T-cell (primary cell): ENCODE measurements at regions of chr3 and their contacts with region 1.

Region 1: DNA sequence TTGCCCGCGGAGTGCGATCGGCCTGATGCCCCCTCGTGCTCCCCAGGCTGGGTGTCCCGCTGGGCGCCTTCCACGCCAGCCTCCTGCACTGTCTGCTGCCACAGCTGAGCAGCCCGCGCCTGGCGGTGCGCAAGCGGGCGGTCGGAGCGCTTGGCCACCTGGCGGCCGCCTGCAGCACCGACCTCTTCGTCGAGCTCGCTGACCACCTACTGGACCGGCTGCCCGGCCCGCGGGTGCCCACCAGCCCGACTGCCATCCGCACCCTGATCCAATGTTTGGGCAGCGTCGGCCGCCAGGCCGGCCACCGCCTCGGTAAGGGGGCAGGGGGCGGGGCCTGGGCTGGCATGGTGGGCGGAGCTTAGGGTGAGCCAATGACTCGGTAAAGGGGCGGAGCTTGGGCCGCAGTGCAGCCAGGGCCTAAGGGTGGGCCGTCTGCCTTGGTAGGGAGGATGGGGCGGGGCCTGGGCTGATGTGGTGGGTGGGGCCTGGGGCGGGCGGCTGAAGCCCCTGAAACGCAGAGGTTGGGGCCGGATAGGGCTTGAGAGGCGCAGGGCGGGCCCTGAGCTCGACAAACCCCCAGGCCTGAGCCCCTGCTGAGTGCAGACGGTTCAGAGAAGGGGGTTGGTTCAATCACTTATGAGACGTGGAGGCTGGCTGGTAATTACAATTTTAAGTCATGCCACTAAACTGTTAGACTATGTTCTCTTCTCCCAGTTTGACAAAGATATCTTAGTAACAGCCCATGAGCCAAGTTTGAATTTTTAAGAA is 13.7 kb downstream of the CAND2 start:
- DNase-seq: peak; percentile 78 to 95 (median 92)
- ATAC-seq: peak; percentile 98 to 100 (median 99)
- H3K4me3 ChIP-seq: peak overlapping the region; percentile 41 to 47
- H3K4me3 Mint-ChIP-seq: peak overlapping the region; percentile 61 to 65 (median 62)
- H3K27ac ChIP-seq: peak overlapping the region; percentile 12
- H3K27ac Mint-ChIP-seq: peak overlapping the region; percentile 57 to 82
- H3K4me1 ChIP-seq: peaks cover 3 to 17% of the 10 kb centered on the region in 2 experiments
- H3K4me1 Mint-ChIP-seq: peaks cover 9 to 15% (median 9%) of the 10 kb centered on the region in 3 donors
- H3K27me3 ChIP-seq: peaks cover 0 to 6% of the 10 kb centered on the region in 2 experiments
- H3K27me3 Mint-ChIP-seq: no peaks in the 10 kb centered on the region

Region 2: DNA sequence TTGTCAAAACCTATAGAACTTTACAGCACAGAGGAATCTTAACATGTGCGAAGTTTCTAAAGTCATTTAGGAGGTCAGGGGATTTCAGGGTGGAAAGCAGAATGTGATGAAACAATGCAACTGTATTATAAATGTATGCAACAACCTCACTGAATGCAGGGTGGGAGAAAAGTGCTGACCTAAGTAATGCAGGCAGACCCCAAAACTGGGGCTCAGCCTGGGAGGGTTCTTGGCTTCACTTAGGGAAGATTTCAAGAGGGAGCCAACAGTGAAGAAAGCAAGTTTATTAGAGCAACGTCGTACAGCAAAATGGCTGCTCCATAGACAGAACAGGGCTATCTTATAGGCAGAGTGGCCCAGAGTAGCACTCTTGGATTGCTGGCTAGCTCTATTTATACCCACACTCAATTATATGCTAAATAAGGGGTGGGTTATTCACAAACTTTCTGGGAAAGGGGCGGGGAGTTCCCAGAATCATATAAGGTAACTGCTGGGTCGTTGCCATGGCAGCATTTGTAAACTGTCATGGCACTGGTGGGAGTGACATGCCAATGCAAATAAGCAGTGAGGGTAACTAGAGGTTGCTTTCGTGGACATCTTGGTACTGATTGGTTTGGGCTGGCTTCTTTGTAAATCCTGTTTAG is 27.9 kb before region 1 on chr3:
- CTCF ChIA-PET with region 1: interaction called, 7 to 19 read pairs
- POLR2A ChIA-PET with region 1: no interaction called
- DNase-seq: no peak
- ATAC-seq: no peak
- H3K4me3 ChIP-seq: no peak overlapping the region
- H3K4me3 Mint-ChIP-seq: no peak overlapping the region
- H3K27ac ChIP-seq: no peak overlapping the region
- H3K27ac Mint-ChIP-seq: no peak overlapping the region
- H3K4me1 ChIP-seq: no peaks in the 10 kb centered on the region
- H3K4me1 Mint-ChIP-seq: no peaks in the 10 kb centered on the region
- H3K27me3 ChIP-seq: peaks cover 0 to 12% of the 10 kb centered on the region in 2 experiments
- H3K27me3 Mint-ChIP-seq: peaks cover 17 to 33% of the 10 kb centered on the region in 2 donors

Region 3: GRCh38 chr3:12796171-12797123 is 13.8 kb before region 1 on chr3 and contains the start of gene CAND2:
- CTCF ChIA-PET with region 1: interaction called, 4 to 14 read pairs
- POLR2A ChIA-PET with region 1: no interaction called
- DNase-seq: peak in 28 of 35 experiments; percentile 11 to 63 (median 37)
- ATAC-seq: peak; percentile 79 to 90 (median 84)
- H3K4me3 ChIP-seq: peak within 1 kb of the TSS; percentile 60 to 67
- H3K4me3 Mint-ChIP-seq: peak within 1 kb of the TSS; percentile 81 to 88 (median 86)
- H3K27ac ChIP-seq: no peak within 1 kb of the TSS
- H3K27ac Mint-ChIP-seq: peak within 1 kb of the TSS; percentile 55 to 66
- H3K4me1 ChIP-seq: peaks cover 0 to 16% of the 10 kb centered on the region in 2 experiments
- H3K4me1 Mint-ChIP-seq: peaks cover 4 to 16% (median 15%) of the 10 kb centered on the region in 3 donors
- H3K27me3 ChIP-seq: peaks cover 0 to 29% of the 10 kb centered on the region in 2 experiments
- H3K27me3 Mint-ChIP-seq: peaks cover 0 to 9% of the 10 kb centered on the region in 2 donors
- total RNA-seq, gene CAND2: 2.1 to 5.9 (median 3.2) TPM

Region 4: DNA sequence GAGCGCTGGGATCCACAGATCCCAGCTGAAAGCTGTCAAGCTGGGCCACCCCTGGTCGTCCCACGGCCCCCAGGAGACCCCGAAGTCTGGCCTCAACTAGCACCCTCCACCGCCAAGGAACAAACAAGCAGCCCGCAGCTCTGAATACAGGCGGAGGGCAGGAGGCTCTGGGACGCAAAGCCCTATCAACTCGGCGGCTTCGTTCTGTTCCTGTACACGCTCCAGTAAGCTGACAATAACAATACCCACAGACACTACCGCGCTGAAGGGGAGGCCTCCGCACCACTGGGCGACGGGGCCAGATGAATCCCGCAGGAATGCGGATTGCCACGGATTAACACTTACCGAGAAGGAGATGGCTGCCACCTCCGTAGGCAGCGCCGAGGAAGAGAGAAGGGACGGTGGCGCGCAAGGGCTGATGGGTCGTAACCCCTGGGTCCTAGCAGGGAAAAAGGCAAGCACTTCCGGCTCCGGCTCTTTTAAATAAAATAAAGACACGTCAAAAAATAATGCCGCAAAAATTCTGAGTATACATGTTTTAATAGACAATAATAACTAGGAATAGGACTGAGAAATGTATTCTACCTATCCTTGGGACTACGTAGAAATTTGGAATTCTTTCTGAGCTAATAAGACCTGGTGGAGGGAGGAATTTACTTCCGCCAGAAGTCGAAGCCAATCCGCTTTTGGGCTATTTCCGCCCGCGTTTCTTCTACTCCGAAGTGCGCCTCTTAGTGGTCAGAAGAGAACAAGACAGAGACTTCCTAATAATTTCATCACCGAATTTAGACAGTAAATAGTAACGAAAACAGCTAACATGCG is 31.2 kb after region 1 on chr3 and contains the start of gene RPL32:
- CTCF ChIA-PET with region 1: interaction called, 5 to 16 read pairs
- POLR2A ChIA-PET with region 1: interaction called in 1 of 2 experiments, 8 read pairs
- DNase-seq: peak; percentile 76 to 97 (median 84)
- ATAC-seq: peak; percentile 86 to 94 (median 91)
- H3K4me3 ChIP-seq: peak within 1 kb of the TSS; percentile 81 to 89
- H3K4me3 Mint-ChIP-seq: peak within 1 kb of the TSS; percentile 94 to 97 (median 97)
- H3K27ac ChIP-seq: peak within 1 kb of the TSS; percentile 98
- H3K27ac Mint-ChIP-seq: peak within 1 kb of the TSS; percentile 100
- H3K4me1 ChIP-seq: peaks cover 3 to 39% of the 10 kb centered on the region in 2 experiments
- H3K4me1 Mint-ChIP-seq: peaks cover 45 to 47% (median 47%) of the 10 kb centered on the region in 3 donors
- H3K27me3 ChIP-seq: no peaks in the 10 kb centered on the region
- H3K27me3 Mint-ChIP-seq: no peaks in the 10 kb centered on the region
- total RNA-seq, gene RPL32: 3,117 to 3,787 (median 3,363) TPM

Region 5: GRCh38 chr3:12994607-12995388 is 184.6 kb after region 1 on chr3:
- CTCF ChIA-PET with region 1: interaction called in 1 of 2 experiments, 10 read pairs
- POLR2A ChIA-PET with region 1: no interaction called
- DNase-seq: peak; percentile 64 to 91 (median 80)
- ATAC-seq: peak; percentile 83 to 93 (median 88)
- H3K4me3 ChIP-seq: peak overlapping the region; percentile 68 to 80
- H3K4me3 Mint-ChIP-seq: peak overlapping the region; percentile 92 to 93 (median 93)
- H3K27ac ChIP-seq: peak overlapping the region; percentile 64
- H3K27ac Mint-ChIP-seq: peak overlapping the region; percentile 87 to 94
- H3K4me1 ChIP-seq: peaks cover 0 to 61% of the 10 kb centered on the region in 2 experiments
- H3K4me1 Mint-ChIP-seq: peaks cover 53 to 74% (median 66%) of the 10 kb centered on the region in 3 donors
- H3K27me3 ChIP-seq: no peaks in the 10 kb centered on the region
- H3K27me3 Mint-ChIP-seq: no peaks in the 10 kb centered on the region